CD4-positive, alpha-beta memory T cell (primary cell): ENCODE measurements at regions of chr16 and their contacts with region 1.

Region 1: GRCh38 chr16:2194852-2195321 is 1.5 kb downstream of the CASKIN1 start:
- DNase-seq: peak; percentile 55 to 61 (median 57)
- H3K4me3 ChIP-seq: no peak overlapping the region
- H3K4me3 Mint-ChIP-seq: peak overlapping the region in 4 of 8 donors; percentile 49 to 80 (median 64)
- H3K27ac ChIP-seq: no peak overlapping the region
- H3K27ac Mint-ChIP-seq: peak overlapping the region in 1 of 7 donors; percentile 55
- H3K4me1 ChIP-seq: peaks cover 11% of the 10 kb centered on the region
- H3K4me1 Mint-ChIP-seq: peaks cover 2 to 13% (median 7%) of the 10 kb centered on the region in 4 donors
- H3K27me3 ChIP-seq: peaks cover 30% of the 10 kb centered on the region
- H3K27me3 Mint-ChIP-seq: peaks cover 15 to 19% of the 10 kb centered on the region in 2 donors

Region 2: GRCh38 chr16:2163211-2163881 is 31.5 kb before region 1 on chr16:
- CTCF ChIA-PET with region 1: no interaction called
- POLR2A ChIA-PET with region 1: no interaction called
- intact Hi-C with region 1: no loop called
- DNase-seq: peak in 3 of 5 donors; percentile 29 to 67 (median 34)
- H3K4me3 ChIP-seq: no peak overlapping the region
- H3K4me3 Mint-ChIP-seq: no peak overlapping the region
- H3K27ac ChIP-seq: no peak overlapping the region
- H3K27ac Mint-ChIP-seq: peak overlapping the region in 4 of 7 donors; percentile 18 to 59 (median 52)
- H3K4me1 ChIP-seq: peaks cover 3% of the 10 kb centered on the region
- H3K4me1 Mint-ChIP-seq: peaks cover 0 to 4% (median 1%) of the 10 kb centered on the region in 4 donors
- H3K27me3 ChIP-seq: no peaks in the 10 kb centered on the region
- H3K27me3 Mint-ChIP-seq: no peaks in the 10 kb centered on the region

Region 3: GRCh38 chr16:2205104-2205966 is 10.4 kb after region 1 on chr16 and contains the start of gene MLST8:
- CTCF ChIA-PET with region 1: no interaction called
- POLR2A ChIA-PET with region 1: interaction called, 24 read pairs
- intact Hi-C with region 1: no loop called
- DNase-seq: peak; percentile 87 to 99 (median 97)
- H3K4me3 ChIP-seq: peak within 1 kb of the TSS; percentile 88 to 89
- H3K4me3 Mint-ChIP-seq: peak within 1 kb of the TSS; percentile 79 to 88 (median 84)
- H3K27ac ChIP-seq: peak within 1 kb of the TSS; percentile 90
- H3K27ac Mint-ChIP-seq: peak within 1 kb of the TSS; percentile 69 to 95 (median 89)
- H3K4me1 ChIP-seq: peaks cover 26% of the 10 kb centered on the region
- H3K4me1 Mint-ChIP-seq: peaks cover 12 to 29% (median 18%) of the 10 kb centered on the region in 4 donors
- H3K27me3 ChIP-seq: no peaks in the 10 kb centered on the region
- H3K27me3 Mint-ChIP-seq: peaks cover 0 to under 1% of the 10 kb centered on the region in 2 donors
- total RNA-seq, gene MLST8: 28.1 to 31.1 TPM

Region 4: DNA sequence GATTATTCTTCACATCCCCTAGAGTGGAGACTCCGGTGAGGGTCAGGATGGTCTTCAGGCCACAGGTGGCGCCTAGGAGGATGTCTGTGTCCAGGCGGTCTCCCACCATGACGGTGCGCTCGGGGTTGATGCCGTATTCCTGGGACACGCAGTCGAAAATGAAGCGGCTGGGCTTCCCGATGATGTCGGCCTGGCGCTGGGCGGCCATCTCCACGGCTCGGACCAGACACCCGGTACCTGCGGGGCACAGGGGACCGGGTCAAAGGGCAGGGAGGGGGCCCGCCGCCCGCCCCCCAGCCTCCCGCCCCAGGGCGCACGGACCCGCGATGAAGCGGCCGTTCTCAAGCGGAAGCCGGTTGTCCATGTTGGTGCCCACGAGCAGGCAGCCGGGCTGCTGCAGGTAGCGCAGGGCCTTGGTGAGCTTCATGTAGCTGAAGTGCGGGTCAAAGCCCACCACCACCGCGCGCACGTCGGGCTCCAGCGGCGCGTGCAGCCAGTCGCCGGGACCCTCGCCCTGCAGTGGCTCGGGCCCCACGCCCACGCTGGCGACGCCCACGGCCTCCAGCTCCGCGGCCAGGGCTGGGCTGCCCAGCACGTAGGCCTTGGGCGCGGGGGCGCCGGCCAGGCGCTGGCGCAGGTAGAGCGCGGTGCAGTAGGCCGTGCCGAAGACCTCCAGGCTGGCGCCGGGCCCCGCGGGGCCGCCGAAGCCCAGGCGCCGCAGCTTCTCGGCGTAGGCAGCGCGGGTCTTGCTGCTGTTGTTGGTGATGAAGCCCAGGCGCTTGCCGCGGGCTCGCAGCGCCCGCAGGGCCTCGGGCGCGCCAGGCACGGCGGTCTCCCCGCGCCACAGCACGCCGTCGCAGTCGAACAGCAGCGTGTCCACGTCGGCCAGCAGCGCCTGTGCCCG is 19.2 kb after region 1 on chr16:
- CTCF ChIA-PET with region 1: interaction called, 8 read pairs
- POLR2A ChIA-PET with region 1: interaction called, 11 read pairs
- intact Hi-C with region 1: no loop called
- DNase-seq: no peak
- H3K4me3 ChIP-seq: peak overlapping the region in 1 of 2 donors; percentile 51
- H3K4me3 Mint-ChIP-seq: peak overlapping the region; percentile 74 to 80 (median 77)
- H3K27ac ChIP-seq: peak overlapping the region; percentile 55
- H3K27ac Mint-ChIP-seq: peak overlapping the region in 4 of 7 donors; percentile 13 to 83 (median 28)
- H3K4me1 ChIP-seq: peaks cover 20% of the 10 kb centered on the region
- H3K4me1 Mint-ChIP-seq: peaks cover 8 to 27% (median 17%) of the 10 kb centered on the region in 4 donors
- H3K27me3 ChIP-seq: no peaks in the 10 kb centered on the region
- H3K27me3 Mint-ChIP-seq: no peaks in the 10 kb centered on the region

Region 5: DNA sequence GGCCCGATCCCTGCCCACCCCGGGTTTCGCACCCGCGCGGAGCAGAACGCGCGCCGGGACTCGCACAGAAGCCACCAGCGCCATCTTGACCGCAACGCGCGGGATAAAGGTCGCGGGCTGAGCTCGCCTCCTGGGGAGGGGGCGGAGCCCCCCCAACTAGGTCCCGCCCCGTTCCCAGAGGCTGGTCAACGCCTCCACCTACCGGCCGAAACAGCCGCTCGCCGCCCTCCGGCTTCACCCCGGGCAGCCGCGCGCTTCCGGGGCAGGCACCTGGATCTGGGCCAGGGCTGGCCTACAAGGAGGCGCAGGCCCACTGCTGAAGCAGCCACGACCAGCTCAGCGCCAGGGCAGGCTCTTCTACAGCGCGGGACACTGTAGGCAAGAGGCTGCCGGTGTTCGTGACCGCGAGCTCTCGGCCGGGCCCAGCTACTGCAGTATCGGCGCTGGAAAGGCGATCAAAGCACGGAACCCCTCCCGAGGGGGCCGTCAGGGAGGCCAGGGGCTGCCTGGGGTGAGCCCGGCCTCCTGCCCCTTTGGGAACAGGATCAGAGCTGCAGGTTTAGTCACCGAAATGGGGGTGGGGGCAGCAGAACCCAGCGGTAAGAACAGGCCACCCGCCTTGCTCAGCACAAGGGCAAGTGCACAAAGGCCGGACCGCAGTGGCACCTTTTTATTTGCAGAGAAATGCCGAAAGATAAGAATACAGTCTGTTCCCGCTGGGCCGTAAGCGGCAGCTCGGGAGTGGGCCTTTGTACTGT is 56.8 kb after region 1 on chr16 and contains the start of gene ECI1:
- CTCF ChIA-PET with region 1: interaction called, 42 read pairs
- POLR2A ChIA-PET with region 1: interaction called, 29 read pairs
- intact Hi-C with region 1: loop called (anchors 1 kb)
- DNase-seq: peak; percentile 65 to 81 (median 72)
- H3K4me3 ChIP-seq: peak within 1 kb of the TSS in 1 of 2 donors; percentile 66
- H3K4me3 Mint-ChIP-seq: peak within 1 kb of the TSS; percentile 87 to 93 (median 90)
- H3K27ac ChIP-seq: peak within 1 kb of the TSS; percentile 61
- H3K27ac Mint-ChIP-seq: peak within 1 kb of the TSS; percentile 88 to 96 (median 91)
- H3K4me1 ChIP-seq: peaks cover 10% of the 10 kb centered on the region
- H3K4me1 Mint-ChIP-seq: peaks cover 1 to 12% (median 5%) of the 10 kb centered on the region in 4 donors
- H3K27me3 ChIP-seq: no peaks in the 10 kb centered on the region
- H3K27me3 Mint-ChIP-seq: no peaks in the 10 kb centered on the region
- total RNA-seq, gene ECI1: 33.0 to 36.6 TPM

Region 6: DNA sequence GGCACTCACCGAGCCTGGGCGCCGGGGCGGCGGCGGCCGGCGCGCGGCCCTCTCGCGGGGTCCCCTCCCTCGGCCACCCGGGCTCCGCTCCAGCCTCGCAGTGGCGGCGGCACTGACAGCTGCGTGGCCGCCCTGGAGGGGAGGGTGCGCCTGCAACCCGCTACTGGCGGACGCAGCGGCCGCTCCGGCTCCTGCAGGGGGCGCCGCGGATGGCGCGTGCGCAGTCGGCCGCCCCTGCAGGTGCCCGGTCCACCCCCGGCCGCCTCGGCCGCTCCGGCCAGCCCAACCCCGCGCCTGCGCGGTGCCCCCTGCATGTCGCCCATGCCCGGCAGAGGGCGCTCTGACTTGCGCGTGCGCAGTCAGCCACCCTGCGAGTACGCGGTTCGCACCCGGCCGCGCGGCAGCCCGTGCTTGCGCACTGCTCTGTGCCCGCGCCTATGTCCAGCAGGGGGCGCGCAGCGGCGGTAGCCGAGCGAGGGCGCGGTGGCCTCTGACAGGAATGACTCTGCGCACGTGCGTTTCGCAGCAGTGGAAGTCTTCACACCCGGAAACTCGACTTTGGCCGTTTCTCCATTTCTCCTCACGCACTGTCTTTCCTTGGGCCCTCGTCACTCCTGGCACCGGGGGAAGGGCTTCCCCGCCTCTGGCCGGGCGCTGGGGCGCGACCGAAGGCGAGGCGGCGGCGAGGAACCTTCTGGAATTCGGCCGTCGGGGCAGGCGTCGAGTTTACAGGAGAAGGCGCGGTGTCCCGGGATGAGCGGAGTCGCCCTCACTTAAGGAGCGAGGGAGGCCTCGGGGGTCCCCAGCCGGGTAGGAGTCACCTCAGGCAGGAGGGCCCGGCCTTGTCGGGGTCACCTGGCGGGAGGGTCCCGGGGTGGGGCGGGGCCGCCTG is 145.9 kb after region 1 on chr16 and contains the start of gene ABCA3:
- CTCF ChIA-PET with region 1: interaction called, 4 read pairs
- POLR2A ChIA-PET with region 1: no interaction called
- intact Hi-C with region 1: loop called (anchors 1 kb)
- DNase-seq: peak; percentile 85 to 96 (median 93)
- H3K4me3 ChIP-seq: peak within 1 kb of the TSS; percentile 1 to 45
- H3K4me3 Mint-ChIP-seq: peak within 1 kb of the TSS; percentile 84 to 88 (median 86)
- H3K27ac ChIP-seq: no peak within 1 kb of the TSS
- H3K27ac Mint-ChIP-seq: peak within 1 kb of the TSS in 6 of 7 donors; percentile 61 to 84 (median 77)
- H3K4me1 ChIP-seq: peaks cover 17% of the 10 kb centered on the region
- H3K4me1 Mint-ChIP-seq: peaks cover 9 to 26% (median 15%) of the 10 kb centered on the region in 4 donors
- H3K27me3 ChIP-seq: no peaks in the 10 kb centered on the region
- H3K27me3 Mint-ChIP-seq: peaks cover 2% of the 10 kb centered on the region in 2 donors
- total RNA-seq, gene ABCA3: 8.5 to 12.7 TPM

Region 7: GRCh38 chr16:2486645-2487516 is 292.0 kb after region 1 on chr16:
- CTCF ChIA-PET with region 1: interaction called, 13 read pairs
- POLR2A ChIA-PET with region 1: no interaction called
- intact Hi-C with region 1: loop called (anchors 1 kb)
- DNase-seq: peak; percentile 76 to 91 (median 80)
- H3K4me3 ChIP-seq: no peak overlapping the region
- H3K4me3 Mint-ChIP-seq: peak overlapping the region; percentile 23 to 68 (median 58)
- H3K27ac ChIP-seq: no peak overlapping the region
- H3K27ac Mint-ChIP-seq: peak overlapping the region; percentile 66 to 95 (median 89)
- H3K4me1 ChIP-seq: peaks cover 14% of the 10 kb centered on the region
- H3K4me1 Mint-ChIP-seq: peaks cover 9 to 19% (median 13%) of the 10 kb centered on the region in 4 donors
- H3K27me3 ChIP-seq: no peaks in the 10 kb centered on the region
- H3K27me3 Mint-ChIP-seq: no peaks in the 10 kb centered on the region

Region 8: DNA sequence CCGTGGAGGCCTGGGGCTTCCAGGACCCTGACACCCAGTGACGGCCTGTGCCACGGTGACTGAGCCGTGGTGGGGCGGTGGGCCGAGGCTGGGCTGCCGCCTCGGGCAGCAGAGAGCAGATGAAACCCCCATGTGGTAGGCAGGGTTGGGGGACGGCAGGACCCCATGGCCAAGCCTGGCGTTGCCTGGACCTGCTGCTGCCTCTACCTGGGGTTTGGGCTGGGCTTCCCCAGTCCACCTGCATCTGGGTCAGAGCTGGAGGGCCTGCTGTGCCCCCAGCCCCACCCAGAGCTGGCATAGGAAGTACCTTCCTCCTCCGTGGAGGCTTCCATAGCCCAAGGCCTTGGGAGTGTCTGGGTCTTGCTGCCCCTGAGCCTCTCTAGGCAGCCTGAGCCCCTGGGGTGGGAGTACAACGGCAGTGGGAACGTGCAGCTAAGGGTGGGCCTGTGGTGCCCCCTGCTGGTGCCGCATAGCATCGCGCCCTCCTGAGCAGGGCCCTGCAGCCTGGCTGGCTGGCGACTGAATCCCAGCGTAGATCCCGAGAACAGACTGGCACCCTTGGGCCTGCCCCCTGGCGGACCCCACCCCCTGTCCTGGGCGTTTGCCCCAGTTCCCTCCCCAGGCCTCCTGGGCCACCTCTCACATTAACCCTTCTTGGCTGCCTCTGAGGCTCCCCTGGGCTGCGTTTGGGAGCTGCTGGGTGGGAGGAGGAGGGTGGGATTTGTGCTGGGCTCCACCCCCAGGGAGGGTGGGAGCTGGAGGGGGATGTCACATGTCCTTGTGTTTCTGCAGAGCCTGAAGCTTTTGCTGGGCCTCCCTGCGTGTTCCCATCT is 306.2 kb after region 1 on chr16:
- CTCF ChIA-PET with region 1: interaction called, 26 read pairs
- POLR2A ChIA-PET with region 1: interaction called, 8 read pairs
- intact Hi-C with region 1: no loop called
- DNase-seq: peak; percentile 73 to 81 (median 75)
- H3K4me3 ChIP-seq: no peak overlapping the region
- H3K4me3 Mint-ChIP-seq: no peak overlapping the region
- H3K27ac ChIP-seq: no peak overlapping the region
- H3K27ac Mint-ChIP-seq: no peak overlapping the region
- H3K4me1 ChIP-seq: no peaks in the 10 kb centered on the region
- H3K4me1 Mint-ChIP-seq: no peaks in the 10 kb centered on the region
- H3K27me3 ChIP-seq: no peaks in the 10 kb centered on the region
- H3K27me3 Mint-ChIP-seq: no peaks in the 10 kb centered on the region